ENCODE measurements at regions of chr15 and their contacts with region 1.

Region 1: GRCh38 chr15:52124270-52124880 is 11.8 kb upstream of the BCL2L10 start:
- DNase-seq: peak; percentile 76
- ATAC-seq: peak; percentile 83
- H3K4me3 ChIP-seq: no peak overlapping the region
- H3K27ac ChIP-seq: peak overlapping the region; percentile 26; the same call in 1 of the 2 replicates
- H3K4me1 ChIP-seq: peaks cover 4% of the 10 kb centered on the region
- H3K27me3 ChIP-seq: no peaks in the 10 kb centered on the region
- CTCF ChIP-seq: no peak
- POLR2A ChIP-seq: no peak
- RAD21 ChIP-seq: no peak

Region 2: DNA sequence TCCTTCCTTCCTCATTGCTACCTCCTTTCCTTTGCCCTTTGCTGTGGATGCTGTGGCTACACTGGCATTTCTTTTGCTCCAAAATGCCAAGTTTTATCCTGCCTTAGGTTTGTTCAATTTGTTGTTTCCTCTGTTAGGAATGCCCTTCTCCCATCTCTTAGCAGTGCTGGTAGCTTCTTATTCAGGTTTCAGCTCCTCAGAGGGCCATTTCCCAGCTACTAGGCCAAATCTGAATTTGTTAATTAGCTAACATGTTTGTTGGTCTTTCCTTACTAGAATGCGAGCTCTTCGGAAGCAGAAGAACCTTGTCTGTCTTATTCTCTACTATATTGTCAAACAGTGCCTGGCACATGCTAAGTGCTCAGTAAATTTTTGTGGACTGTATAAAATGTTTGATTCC is 94.4 kb before region 1 on chr15:
- CTCF ChIA-PET with region 1: no interaction called
- POLR2A ChIA-PET with region 1: interaction called, 14 read pairs
- dilution Hi-C with region 1: no loop called
- in situ Hi-C with region 1: no loop called
- intact Hi-C with region 1: no loop called
- DNase-seq: no peak
- ATAC-seq: no peak
- H3K4me3 ChIP-seq: no peak overlapping the region
- H3K27ac ChIP-seq: no peak overlapping the region
- H3K4me1 ChIP-seq: 0 out of 2 replicates have a peak, but pooled peaks cover 3% of the 10 kb centered on the region
- H3K27me3 ChIP-seq: no peaks in the 10 kb centered on the region
- CTCF ChIP-seq: no peak
- POLR2A ChIP-seq: no peak
- RAD21 ChIP-seq: no peak

Region 3: GRCh38 chr15:52071546-52071945 is 52.8 kb before region 1 on chr15:
- CTCF ChIA-PET with region 1: no interaction called
- POLR2A ChIA-PET with region 1: no interaction called
- dilution Hi-C with region 1: no loop called
- in situ Hi-C with region 1: no loop called
- intact Hi-C with region 1: no loop called
- DNase-seq: no peak
- ATAC-seq: no peak; the same call in 1 of the 2 replicates
- H3K4me3 ChIP-seq: no peak overlapping the region
- H3K27ac ChIP-seq: no peak overlapping the region
- H3K4me1 ChIP-seq: peaks cover 3% of the 10 kb centered on the region
- H3K27me3 ChIP-seq: no peaks in the 10 kb centered on the region
- CTCF ChIP-seq: no peak
- POLR2A ChIP-seq: no peak
- RAD21 ChIP-seq: no peak

Region 4: DNA sequence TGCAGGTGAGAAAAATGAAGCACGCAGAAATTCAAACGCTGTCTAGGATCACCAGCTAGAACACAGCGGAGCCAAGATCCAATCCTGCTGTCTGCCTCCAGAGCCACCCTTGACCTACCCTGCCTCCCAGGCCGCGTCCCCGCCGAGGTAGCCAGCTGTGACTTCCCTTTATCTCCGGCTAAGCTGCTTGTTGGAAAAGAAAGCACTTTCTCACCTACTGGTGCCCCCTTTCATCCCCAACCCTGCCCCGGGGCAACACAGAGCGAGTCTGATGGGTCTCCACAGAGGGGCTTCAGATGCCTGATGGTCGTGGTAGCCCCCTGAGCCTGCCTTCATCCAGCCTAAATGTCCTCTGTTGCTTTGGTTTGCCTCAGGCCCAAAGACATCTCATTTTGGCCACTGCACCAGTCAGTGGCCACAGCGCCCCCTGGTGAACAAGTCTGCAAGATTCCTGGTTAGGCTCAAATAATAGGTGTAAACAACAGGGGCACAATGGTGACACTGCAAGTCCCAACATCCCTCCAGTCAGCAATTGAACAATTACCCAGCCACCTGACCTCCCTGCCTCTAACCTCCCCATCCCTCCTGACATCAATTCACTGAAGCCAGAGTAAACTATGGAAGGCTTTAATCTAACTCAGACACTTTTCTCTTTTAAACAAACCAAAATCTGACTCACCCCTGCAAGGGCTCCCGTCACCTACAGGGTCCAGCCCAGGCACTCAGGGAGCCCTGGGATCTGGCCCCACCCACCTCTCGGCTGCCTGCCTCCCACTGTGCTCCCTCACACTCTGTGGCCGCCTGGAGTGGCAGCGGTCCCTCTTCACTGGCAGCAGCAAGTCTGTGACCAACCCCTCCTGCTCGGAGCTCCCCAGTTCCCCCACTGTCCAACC is 15.5 kb after region 1 on chr15:
- CTCF ChIA-PET with region 1: no interaction called
- POLR2A ChIA-PET with region 1: interaction called, 17 read pairs
- dilution Hi-C with region 1: no loop called
- in situ Hi-C with region 1: no loop called
- intact Hi-C with region 1: no loop called
- DNase-seq: peak; percentile 62
- ATAC-seq: peak; percentile 47
- H3K4me3 ChIP-seq: no peak overlapping the region
- H3K27ac ChIP-seq: no peak overlapping the region
- H3K4me1 ChIP-seq: peaks cover 21% of the 10 kb centered on the region
- H3K27me3 ChIP-seq: no peaks in the 10 kb centered on the region
- CTCF ChIP-seq: peak; percentile 80
- POLR2A ChIP-seq: no peak
- RAD21 ChIP-seq: peak; percentile 79

Region 5: GRCh38 chr15:52232327-52232726 is 108.0 kb after region 1 on chr15:
- CTCF ChIA-PET with region 1: no interaction called
- POLR2A ChIA-PET with region 1: no interaction called
- dilution Hi-C with region 1: no loop called
- in situ Hi-C with region 1: no loop called
- intact Hi-C with region 1: no loop called
- DNase-seq: no peak
- ATAC-seq: no peak
- H3K4me3 ChIP-seq: no peak overlapping the region
- H3K27ac ChIP-seq: no peak overlapping the region
- H3K4me1 ChIP-seq: peaks cover 5% of the 10 kb centered on the region
- H3K27me3 ChIP-seq: peaks cover 5% of the 10 kb centered on the region; the same call in 1 of the 2 replicates
- CTCF ChIP-seq: no peak
- POLR2A ChIP-seq: no peak
- RAD21 ChIP-seq: no peak

Measured in IMR-90 (cell line).